Right lobe of liver (tissue), 6 donors: ENCODE measurements at regions of chr3 and their contacts with region 1.

Region 1: DNA sequence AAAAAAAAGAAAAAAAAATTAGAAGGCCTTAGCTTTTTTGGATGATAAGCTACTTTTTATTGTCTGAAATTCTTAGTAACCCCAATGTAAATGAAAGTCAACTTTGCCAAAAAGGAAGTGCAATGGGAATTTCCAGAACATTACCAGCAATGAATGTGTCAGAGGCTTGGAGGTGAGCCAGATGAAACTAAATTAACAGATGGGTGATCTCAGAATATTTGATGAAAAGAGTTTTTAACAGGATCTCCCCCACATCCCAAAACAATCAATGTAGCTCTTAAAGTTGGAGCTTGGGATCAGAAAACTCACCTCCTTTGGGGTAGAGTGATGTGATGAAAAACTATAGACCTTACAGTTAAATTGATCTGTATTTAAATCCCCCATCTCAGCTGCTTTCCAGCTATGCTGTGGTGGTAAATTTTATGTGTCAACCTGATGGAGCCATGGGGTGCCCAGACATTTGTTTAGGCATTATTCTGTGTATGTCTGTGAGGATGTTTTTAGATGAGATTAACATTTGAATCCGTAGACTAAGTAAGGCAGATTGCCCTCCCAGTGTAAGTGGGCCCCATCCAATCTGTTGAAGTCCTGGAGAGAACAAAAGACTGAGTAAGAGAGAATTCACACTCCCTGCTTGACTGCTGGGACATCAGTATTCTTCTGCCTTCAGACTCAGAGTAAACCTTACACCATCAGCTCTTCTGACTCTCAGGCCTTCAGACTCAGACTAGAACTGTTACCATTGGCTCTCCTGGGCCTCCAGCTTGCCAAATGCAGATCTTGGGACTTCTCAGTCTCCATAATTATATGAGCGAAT is 84.3 kb upstream of the TNFSF10 start:
- DNase-seq: no peak
- ATAC-seq: peak in 1 of 4 donors; percentile 78
- H3K4me3 ChIP-seq: no peak overlapping the region
- H3K27ac ChIP-seq: peak overlapping the region in 1 of 3 donors; percentile 46
- H3K4me1 ChIP-seq: no peaks in the 10 kb centered on the region
- H3K27me3 ChIP-seq: no peaks in the 10 kb centered on the region
- CTCF ChIP-seq: no peak
- POLR2A ChIP-seq: no peak

Region 2: GRCh38 chr3:172501560-172501959 is 106.0 kb before region 1 on chr3:
- intact Hi-C with region 1: loop called in 1 of 2 experiments (anchors 10 kb)
- DNase-seq: no peak
- ATAC-seq: no peak
- H3K4me3 ChIP-seq: no peak overlapping the region
- H3K27ac ChIP-seq: no peak overlapping the region
- H3K4me1 ChIP-seq: no peaks in the 10 kb centered on the region
- H3K27me3 ChIP-seq: no peaks in the 10 kb centered on the region
- CTCF ChIP-seq: no peak
- POLR2A ChIP-seq: no peak

Region 3: GRCh38 chr3:172646439-172647015 is 39.0 kb after region 1 on chr3:
- intact Hi-C with region 1: no loop called
- DNase-seq: peak in 1 of 3 donors; percentile 54
- ATAC-seq: peak; percentile 38 to 62 (median 50)
- H3K4me3 ChIP-seq: no peak overlapping the region
- H3K27ac ChIP-seq: no peak overlapping the region
- H3K4me1 ChIP-seq: peaks cover 0 to 6% (median 0%) of the 10 kb centered on the region in 4 donors
- H3K27me3 ChIP-seq: no peaks in the 10 kb centered on the region
- CTCF ChIP-seq: no peak
- POLR2A ChIP-seq: no peak

Region 4: GRCh38 chr3:172892158-172892557 is 284.6 kb after region 1 on chr3:
- intact Hi-C with region 1: no loop called
- DNase-seq: no peak
- ATAC-seq: no peak
- H3K4me3 ChIP-seq: no peak overlapping the region
- H3K27ac ChIP-seq: no peak overlapping the region
- H3K4me1 ChIP-seq: no peaks in the 10 kb centered on the region
- H3K27me3 ChIP-seq: no peaks in the 10 kb centered on the region
- CTCF ChIP-seq: no peak
- POLR2A ChIP-seq: no peak

Region 5: DNA sequence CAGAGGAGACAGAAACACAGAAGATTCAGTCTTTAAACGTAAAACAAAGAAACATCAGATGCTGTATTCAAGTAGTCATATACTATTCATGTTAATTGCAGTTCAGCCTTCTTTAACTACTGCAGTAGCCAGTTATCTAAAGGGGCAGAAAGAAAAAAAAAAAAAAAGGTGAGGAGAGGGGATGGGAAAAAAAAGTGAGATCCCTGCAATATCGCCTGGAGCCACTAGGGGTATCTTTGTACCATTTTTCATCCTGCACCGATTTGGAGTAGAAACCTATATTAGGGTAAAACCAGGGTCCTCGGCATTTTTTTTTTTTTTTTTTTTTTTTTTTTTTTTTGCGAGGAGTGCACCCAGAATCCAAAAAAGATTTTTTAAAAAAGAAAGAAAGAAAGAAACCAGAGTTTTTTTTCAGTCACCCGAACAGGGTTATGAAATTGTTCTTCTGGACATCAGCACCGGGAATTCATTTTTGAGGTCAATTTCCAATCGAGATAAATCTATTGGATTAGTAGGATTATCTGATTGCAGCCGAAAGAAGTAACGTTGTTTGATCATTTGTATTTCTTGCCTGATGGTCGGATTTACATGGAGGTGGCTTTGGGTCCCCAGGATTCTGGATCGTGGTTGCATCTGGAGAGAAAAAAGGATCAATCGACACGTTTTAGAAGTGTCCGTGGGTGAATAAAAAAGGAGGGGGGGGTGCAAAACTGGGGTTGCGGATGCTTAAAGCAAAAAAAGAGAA is 976.8 kb after region 1 on chr3:
- intact Hi-C with region 1: no loop called
- DNase-seq: no peak
- ATAC-seq: peak in 3 of 4 donors; percentile 41 to 57 (median 49)
- H3K4me3 ChIP-seq: no peak overlapping the region
- H3K27ac ChIP-seq: no peak overlapping the region
- H3K4me1 ChIP-seq: peaks cover 0 to 12% (median 0%) of the 10 kb centered on the region in 4 donors
- H3K27me3 ChIP-seq: peaks cover 0 to 5% of the 10 kb centered on the region in 2 donors
- CTCF ChIP-seq: peak; percentile 7 to 49 (median 48)
- POLR2A ChIP-seq: no peak